Naive thymus-derived CD4-positive, alpha-beta T cell (primary cell): ENCODE measurements at regions of chr2 and their contacts with region 1.

Region 1: GRCh38 chr2:170928824-170929685 is at the start of gene GORASP2:
- DNase-seq: peak; percentile 97 to 99 (median 98)
- ATAC-seq: peak; percentile 94
- H3K4me3 ChIP-seq: peak within 1 kb of the TSS; percentile 88
- H3K4me3 Mint-ChIP-seq: peak within 1 kb of the TSS; percentile 89 to 97 (median 95)
- H3K27ac ChIP-seq: peak within 1 kb of the TSS; percentile 87
- H3K27ac Mint-ChIP-seq: peak within 1 kb of the TSS; percentile 93 to 96 (median 95)
- H3K4me1 ChIP-seq: peaks cover 18 to 32% of the 10 kb centered on the region in 2 donors
- H3K4me1 Mint-ChIP-seq: peaks cover 24 to 56% (median 48%) of the 10 kb centered on the region in 7 donors
- H3K27me3 ChIP-seq: no peaks in the 10 kb centered on the region
- H3K27me3 Mint-ChIP-seq: no peaks in the 10 kb centered on the region
- total RNA-seq, gene GORASP2: 65.2 to 79.2 (median 73.2) TPM

Region 2: GRCh38 chr2:169727065-169727464 is 1202.0 kb before region 1 on chr2:
- CTCF ChIA-PET with region 1: no interaction called
- POLR2A ChIA-PET with region 1: no interaction called
- intact Hi-C with region 1: no loop called
- DNase-seq: no peak
- ATAC-seq: no peak
- H3K4me3 ChIP-seq: no peak overlapping the region
- H3K4me3 Mint-ChIP-seq: no peak overlapping the region
- H3K27ac ChIP-seq: no peak overlapping the region
- H3K27ac Mint-ChIP-seq: no peak overlapping the region
- H3K4me1 ChIP-seq: no peaks in the 10 kb centered on the region
- H3K4me1 Mint-ChIP-seq: peaks cover 0 to 4% (median under 1%) of the 10 kb centered on the region in 7 donors
- H3K27me3 ChIP-seq: no peaks in the 10 kb centered on the region
- H3K27me3 Mint-ChIP-seq: peaks cover 2 to 19% (median 6%) of the 10 kb centered on the region in 5 donors

Region 3: GRCh38 chr2:169824373-169825333 is 1104.4 kb before region 1 on chr2 and contains the start of gene METTL5:
- CTCF ChIA-PET with region 1: no interaction called
- POLR2A ChIA-PET with region 1: interaction called, 4 read pairs
- intact Hi-C with region 1: loop called in 1 of 2 experiments (anchors 5 kb)
- DNase-seq: peak; percentile 55 to 90 (median 71)
- ATAC-seq: peak; percentile 80
- H3K4me3 ChIP-seq: peak within 1 kb of the TSS; percentile 80
- H3K4me3 Mint-ChIP-seq: peak within 1 kb of the TSS; percentile 82 to 99 (median 91)
- H3K27ac ChIP-seq: peak within 1 kb of the TSS; percentile 85
- H3K27ac Mint-ChIP-seq: peak within 1 kb of the TSS; percentile 84 to 96 (median 89)
- H3K4me1 ChIP-seq: peaks cover 19 to 28% of the 10 kb centered on the region in 2 donors
- H3K4me1 Mint-ChIP-seq: peaks cover 46 to 75% (median 65%) of the 10 kb centered on the region in 7 donors
- H3K27me3 ChIP-seq: no peaks in the 10 kb centered on the region
- H3K27me3 Mint-ChIP-seq: no peaks in the 10 kb centered on the region
- total RNA-seq, gene METTL5: 21.1 to 52.9 (median 44.2) TPM

Region 4: DNA sequence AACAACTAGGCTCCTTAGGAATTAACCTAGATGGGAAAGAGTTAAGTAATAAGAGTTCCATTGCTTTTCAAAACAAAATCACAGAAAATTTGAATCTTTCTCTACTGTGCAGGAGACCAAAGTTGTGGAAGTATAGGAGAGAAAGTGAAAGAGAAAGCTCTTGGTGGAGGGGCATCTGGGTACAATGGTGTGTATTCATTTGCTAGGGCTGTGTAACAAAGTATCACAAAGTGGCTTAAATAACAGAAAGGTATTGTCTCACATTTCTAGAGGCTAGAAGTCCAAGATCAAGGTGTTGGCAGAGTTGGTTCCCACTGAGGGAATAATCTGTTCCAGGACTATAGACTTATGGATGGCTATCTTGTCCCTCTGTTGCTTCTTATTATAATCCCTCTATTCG is 50.5 kb before region 1 on chr2:
- CTCF ChIA-PET with region 1: interaction called, 3 read pairs
- POLR2A ChIA-PET with region 1: no interaction called
- intact Hi-C with region 1: loop called in 1 of 2 experiments (anchors 1 kb)
- DNase-seq: peak in 2 of 9 donors; percentile 3 to 5
- ATAC-seq: no peak
- H3K4me3 ChIP-seq: no peak overlapping the region
- H3K4me3 Mint-ChIP-seq: peak overlapping the region in 8 of 10 donors; percentile 33 to 71 (median 60)
- H3K27ac ChIP-seq: no peak overlapping the region
- H3K27ac Mint-ChIP-seq: peak overlapping the region in 3 of 9 donors; percentile 9 to 22 (median 10)
- H3K4me1 ChIP-seq: peaks cover 1 to 3% of the 10 kb centered on the region in 2 donors
- H3K4me1 Mint-ChIP-seq: peaks cover under 1 to 15% (median 10%) of the 10 kb centered on the region in 7 donors
- H3K27me3 ChIP-seq: no peaks in the 10 kb centered on the region
- H3K27me3 Mint-ChIP-seq: peaks cover 0 to 27% (median 4%) of the 10 kb centered on the region in 5 donors

Region 5: GRCh38 chr2:171160119-171160955 is 231.3 kb after region 1 on chr2 and contains the start of gene TLK1:
- CTCF ChIA-PET with region 1: interaction called, 5 read pairs
- POLR2A ChIA-PET with region 1: interaction called, 24 read pairs
- intact Hi-C with region 1: loop called (anchors 1 kb)
- DNase-seq: peak; percentile 63 to 84 (median 81)
- ATAC-seq: peak; percentile 78
- H3K4me3 ChIP-seq: peak within 1 kb of the TSS; percentile 70
- H3K4me3 Mint-ChIP-seq: peak within 1 kb of the TSS; percentile 87 to 98 (median 96)
- H3K27ac ChIP-seq: peak within 1 kb of the TSS; percentile 99
- H3K27ac Mint-ChIP-seq: peak within 1 kb of the TSS; percentile 88 to 98 (median 97)
- H3K4me1 ChIP-seq: peaks cover 30 to 39% of the 10 kb centered on the region in 2 donors
- H3K4me1 Mint-ChIP-seq: peaks cover 49 to 70% (median 58%) of the 10 kb centered on the region in 7 donors
- H3K27me3 ChIP-seq: no peaks in the 10 kb centered on the region
- H3K27me3 Mint-ChIP-seq: no peaks in the 10 kb centered on the region
- total RNA-seq, gene TLK1: 96.9 to 191 (median 141) TPM

Region 6: DNA sequence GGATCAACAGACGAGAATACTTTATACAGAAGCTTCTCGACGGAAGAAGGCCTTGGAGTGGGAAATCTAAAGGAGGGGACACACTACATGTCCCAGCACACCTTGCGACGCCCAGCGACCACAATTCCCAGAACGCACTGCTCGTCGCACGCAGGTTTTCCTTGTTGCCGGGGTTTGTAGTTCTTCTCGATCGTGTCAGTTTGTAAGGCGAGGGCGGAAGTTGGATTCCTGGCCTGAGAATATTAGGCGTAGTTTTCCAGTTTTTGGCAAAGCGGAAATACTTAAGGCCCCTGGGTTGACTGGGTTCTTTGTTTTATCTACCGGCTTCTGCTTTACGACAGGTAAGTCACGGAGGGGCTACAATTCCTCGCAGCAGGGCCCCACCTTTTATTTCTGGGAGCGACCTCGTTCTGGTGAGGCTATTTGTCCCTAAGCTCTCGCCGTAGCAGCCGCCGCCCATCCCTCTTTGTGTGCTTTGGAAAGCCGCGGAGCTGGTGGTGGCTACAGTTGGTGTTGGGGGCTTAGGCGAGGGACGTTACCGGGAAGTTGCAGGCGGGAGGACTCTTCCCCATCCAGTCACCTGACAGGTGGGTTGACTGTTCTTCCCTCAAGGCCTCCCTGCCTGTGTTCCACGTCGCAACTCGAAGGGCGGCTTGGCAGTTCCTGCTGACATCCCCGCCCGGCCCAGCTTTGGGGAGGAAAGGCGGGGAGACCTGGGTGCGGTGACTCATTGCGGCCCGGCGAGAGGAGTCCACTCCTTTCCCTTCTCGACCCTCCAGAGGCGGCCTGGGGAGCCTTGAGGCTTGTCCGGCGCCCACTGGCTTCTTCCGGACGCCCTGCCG is 758.5 kb after region 1 on chr2 and contains the start of gene DYNC1I2:
- CTCF ChIA-PET with region 1: no interaction called
- POLR2A ChIA-PET with region 1: no interaction called
- intact Hi-C with region 1: loop called (anchors 1 kb)
- DNase-seq: peak; percentile 38 to 82 (median 79)
- ATAC-seq: peak; percentile 90
- H3K4me3 ChIP-seq: peak within 1 kb of the TSS; percentile 96
- H3K4me3 Mint-ChIP-seq: peak within 1 kb of the TSS; percentile 89 to 98 (median 93)
- H3K27ac ChIP-seq: peak within 1 kb of the TSS; percentile 67
- H3K27ac Mint-ChIP-seq: peak within 1 kb of the TSS; percentile 77 to 95 (median 85)
- H3K4me1 ChIP-seq: peaks cover 7 to 10% of the 10 kb centered on the region in 2 donors
- H3K4me1 Mint-ChIP-seq: peaks cover 11 to 43% (median 24%) of the 10 kb centered on the region in 7 donors
- H3K27me3 ChIP-seq: no peaks in the 10 kb centered on the region
- H3K27me3 Mint-ChIP-seq: peaks cover 0 to 21% (median 0%) of the 10 kb centered on the region in 5 donors
- total RNA-seq, gene DYNC1I2: 21.5 to 57.0 (median 41.7) TPM

Region 7: GRCh38 chr2:172555522-172556283 is 1626.6 kb after region 1 on chr2 and contains the start of gene PDK1:
- CTCF ChIA-PET with region 1: no interaction called
- POLR2A ChIA-PET with region 1: no interaction called
- intact Hi-C with region 1: loop called (anchors 2 kb)
- DNase-seq: peak; percentile 89 to 95 (median 94)
- ATAC-seq: peak; percentile 97
- H3K4me3 ChIP-seq: peak within 1 kb of the TSS; percentile 84
- H3K4me3 Mint-ChIP-seq: peak within 1 kb of the TSS; percentile 88 to 99 (median 93)
- H3K27ac ChIP-seq: peak within 1 kb of the TSS; percentile 98
- H3K27ac Mint-ChIP-seq: peak within 1 kb of the TSS; percentile 86 to 97 (median 95)
- H3K4me1 ChIP-seq: peaks cover 10 to 29% of the 10 kb centered on the region in 2 donors
- H3K4me1 Mint-ChIP-seq: peaks cover 37 to 72% (median 64%) of the 10 kb centered on the region in 7 donors
- H3K27me3 ChIP-seq: no peaks in the 10 kb centered on the region
- H3K27me3 Mint-ChIP-seq: peaks cover 0 to 5% (median 0%) of the 10 kb centered on the region in 5 donors
- total RNA-seq, gene PDK1: 56.0 to 70.6 (median 66.6) TPM